ENCODE measurements at regions of chr5 and their contacts with region 1.

Region 1: GRCh38 chr5:115586601-115587048 is 15.7 kb downstream of the TICAM2 start:
- DNase-seq: no peak
- ATAC-seq: peak; percentile 32

Region 2: GRCh38 chr5:115309751-115310370 is 276.8 kb before region 1 on chr5:
- intact Hi-C with region 1: loop called (anchors 2 kb)
- DNase-seq: no peak
- ATAC-seq: peak; percentile 38

Region 3: GRCh38 chr5:115460472-115460871 is 126.2 kb before region 1 on chr5:
- intact Hi-C with region 1: no loop called
- DNase-seq: peak; percentile 89
- ATAC-seq: peak; percentile 91